ENCODE measurements at regions of chr1 and their contacts with region 1.

Region 1: DNA sequence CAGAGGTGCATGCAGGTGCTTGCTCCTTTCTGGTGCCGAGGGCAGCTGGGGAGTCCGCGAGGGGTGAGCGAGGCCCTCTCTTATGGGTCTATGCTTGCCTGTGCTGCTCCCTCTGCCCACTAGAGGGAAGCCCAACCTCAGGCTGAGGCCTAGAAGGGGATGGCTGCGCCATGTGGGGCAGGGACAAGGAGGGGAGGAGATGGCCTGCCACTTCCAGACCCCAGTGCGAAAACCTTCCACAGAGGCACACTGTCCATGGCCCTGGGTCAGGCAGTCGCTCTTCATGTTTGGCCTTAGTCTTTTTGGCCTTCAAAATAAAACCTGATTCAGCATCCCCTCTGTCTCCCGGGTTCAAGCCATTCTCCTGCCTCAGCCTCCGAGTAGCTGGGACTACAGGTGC is 14.0 kb downstream of the RHBG start:
- DNase-seq: peak; percentile 92
- ATAC-seq: peak; percentile 95
- H3K4me3 Mint-ChIP-seq: no peak overlapping the region
- H3K27ac Mint-ChIP-seq: no peak overlapping the region
- H3K4me1 Mint-ChIP-seq: peaks cover 21% of the 10 kb centered on the region
- H3K27me3 Mint-ChIP-seq: peaks cover 24% of the 10 kb centered on the region
- CTCF ChIP-seq: peak; percentile 87

Region 2: DNA sequence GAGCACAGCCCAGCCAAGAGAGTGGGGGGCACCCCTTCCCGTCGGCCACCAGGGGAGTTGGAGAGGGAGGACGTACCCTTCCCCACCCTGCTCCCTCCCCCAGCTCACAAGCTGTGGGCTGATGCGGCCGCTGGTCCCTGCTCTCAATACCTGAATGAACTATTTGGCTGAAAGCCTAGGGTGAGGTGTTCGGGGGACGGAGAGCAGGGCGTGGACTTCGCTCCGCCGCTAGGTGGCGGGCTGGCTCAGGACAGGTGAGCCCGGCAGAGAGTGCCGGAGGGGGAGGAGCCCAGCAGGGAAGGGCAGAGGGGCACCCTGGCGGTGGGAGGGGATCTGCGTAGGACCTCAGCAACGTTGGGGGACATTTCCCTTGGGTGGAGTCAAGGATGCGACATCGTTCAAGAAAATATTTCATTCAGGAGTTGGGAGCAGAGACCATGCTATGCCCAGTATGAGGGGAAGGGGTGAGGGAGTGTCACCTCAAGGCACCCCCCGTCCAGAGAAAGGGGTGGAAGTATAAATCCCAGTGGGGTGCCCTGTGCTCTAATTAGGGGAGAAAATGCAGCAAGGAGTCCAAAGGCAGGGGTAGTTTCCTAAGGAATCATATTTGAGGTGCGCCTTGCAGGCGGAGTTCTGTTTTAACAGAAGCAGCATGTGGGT is 26.0 kb before region 1 on chr1:
- CTCF ChIA-PET with region 1: interaction called, 34 read pairs
- POLR2A ChIA-PET with region 1: no interaction called
- DNase-seq: peak; percentile 93
- ATAC-seq: peak; percentile 96
- H3K4me3 Mint-ChIP-seq: peak overlapping the region; percentile 79
- H3K27ac Mint-ChIP-seq: no peak overlapping the region
- H3K4me1 Mint-ChIP-seq: peaks cover 12% of the 10 kb centered on the region
- H3K27me3 Mint-ChIP-seq: peaks cover 24% of the 10 kb centered on the region
- CTCF ChIP-seq: peak; percentile 86

Region 3: DNA sequence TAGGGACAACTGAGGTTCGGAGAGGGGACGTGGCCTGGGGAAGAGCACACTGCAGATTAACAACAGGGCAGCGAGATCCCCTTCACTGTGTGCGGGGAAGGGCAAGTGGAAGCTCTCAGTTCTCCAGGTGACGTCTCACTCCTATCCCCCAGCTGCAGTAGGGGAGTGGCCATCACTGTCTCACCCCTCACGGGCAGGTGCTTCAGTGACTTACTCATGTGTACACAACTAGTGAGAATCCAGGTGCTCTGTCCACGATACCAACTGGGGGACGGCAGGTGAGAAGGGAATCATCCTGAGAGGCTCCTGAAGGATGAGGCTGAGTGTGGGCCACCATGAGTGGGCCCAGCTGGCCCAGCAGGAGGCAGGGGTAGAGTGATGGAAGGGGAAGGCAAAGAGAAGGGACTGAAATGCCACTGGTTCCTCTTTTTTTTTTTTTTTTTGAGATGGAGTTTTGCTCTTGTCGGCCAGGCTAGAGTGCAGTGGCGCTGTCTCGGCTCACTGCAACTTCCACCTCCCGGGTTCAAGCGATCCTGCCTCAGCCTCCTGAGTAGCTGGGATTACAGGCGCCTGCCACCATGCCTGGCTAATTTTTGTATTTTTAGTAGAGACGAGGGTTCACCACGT is 11.9 kb after region 1 on chr1:
- CTCF ChIA-PET with region 1: interaction called, 107 read pairs
- POLR2A ChIA-PET with region 1: no interaction called
- DNase-seq: no peak
- ATAC-seq: no peak
- H3K4me3 Mint-ChIP-seq: no peak overlapping the region
- H3K27ac Mint-ChIP-seq: no peak overlapping the region
- H3K4me1 Mint-ChIP-seq: peaks cover 42% of the 10 kb centered on the region
- H3K27me3 Mint-ChIP-seq: peaks cover 29% of the 10 kb centered on the region
- CTCF ChIP-seq: no peak

Region 4: GRCh38 chr1:156421062-156421938 is 38.3 kb after region 1 on chr1:
- CTCF ChIA-PET with region 1: interaction called, 252 read pairs
- POLR2A ChIA-PET with region 1: interaction called, 4 read pairs
- DNase-seq: peak; percentile 93
- ATAC-seq: peak; percentile 88
- H3K4me3 Mint-ChIP-seq: peak overlapping the region; percentile 76
- H3K27ac Mint-ChIP-seq: no peak overlapping the region
- H3K4me1 Mint-ChIP-seq: peaks cover 34% of the 10 kb centered on the region
- H3K27me3 Mint-ChIP-seq: peaks cover 100% of the 10 kb centered on the region
- CTCF ChIP-seq: no peak

Region 5: GRCh38 chr1:156451505-156452160 is 68.6 kb after region 1 on chr1:
- CTCF ChIA-PET with region 1: interaction called, 401 read pairs
- POLR2A ChIA-PET with region 1: no interaction called
- DNase-seq: no peak
- ATAC-seq: no peak
- H3K4me3 Mint-ChIP-seq: no peak overlapping the region
- H3K27ac Mint-ChIP-seq: no peak overlapping the region
- H3K4me1 Mint-ChIP-seq: peaks cover 16% of the 10 kb centered on the region
- H3K27me3 Mint-ChIP-seq: no peaks in the 10 kb centered on the region
- CTCF ChIP-seq: no peak

Region 6: GRCh38 chr1:156500797-156501499 is 117.9 kb after region 1 on chr1:
- CTCF ChIA-PET with region 1: interaction called, 26 read pairs
- POLR2A ChIA-PET with region 1: no interaction called
- DNase-seq: peak; percentile 89
- ATAC-seq: peak; percentile 65
- H3K4me3 Mint-ChIP-seq: peak overlapping the region; percentile 83
- H3K27ac Mint-ChIP-seq: peak overlapping the region; percentile 36; the same call in 1 of the 2 replicates
- H3K4me1 Mint-ChIP-seq: peaks cover 70% of the 10 kb centered on the region
- H3K27me3 Mint-ChIP-seq: peaks cover 13% of the 10 kb centered on the region
- CTCF ChIP-seq: no peak

Region 7: DNA sequence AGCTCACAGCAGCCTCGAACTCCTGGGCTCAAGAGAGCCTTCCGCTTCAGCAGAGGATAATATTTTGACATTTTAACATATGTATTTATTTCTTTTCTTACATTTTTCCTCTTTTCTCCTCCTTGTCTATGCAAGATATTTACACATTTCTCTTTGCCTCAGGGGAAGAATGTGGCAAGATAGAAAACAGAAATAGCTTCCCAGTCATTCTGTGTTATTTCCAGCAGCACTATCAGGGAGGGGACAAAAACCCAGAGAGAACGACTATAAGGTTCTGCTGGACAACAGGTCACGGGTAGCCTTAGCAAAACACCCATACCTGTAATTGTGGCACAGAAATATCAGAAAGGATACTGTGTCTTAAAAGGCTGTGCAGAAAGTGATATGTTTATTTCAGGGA is 1805.6 kb after region 1 on chr1:
- CTCF ChIA-PET with region 1: no interaction called
- POLR2A ChIA-PET with region 1: no interaction called
- DNase-seq: no peak
- ATAC-seq: no peak
- H3K4me3 Mint-ChIP-seq: no peak overlapping the region
- H3K27ac Mint-ChIP-seq: no peak overlapping the region
- H3K4me1 Mint-ChIP-seq: peaks cover 51% of the 10 kb centered on the region
- H3K27me3 Mint-ChIP-seq: peaks cover 13% of the 10 kb centered on the region
- CTCF ChIP-seq: no peak